ENCODE measurements at regions of chr7 and their contacts with region 1.

Region 1: GRCh38 chr7:26864309-26865093 is at the start of gene SKAP2:
- DNase-seq: peak; percentile 92
- ATAC-seq: peak; percentile 84
- H3K4me3 Mint-ChIP-seq: peak within 1 kb of the TSS; percentile 99
- H3K27ac Mint-ChIP-seq: peak within 1 kb of the TSS; percentile 99
- H3K4me1 Mint-ChIP-seq: peaks cover 32% of the 10 kb centered on the region
- H3K27me3 Mint-ChIP-seq: no peaks in the 10 kb centered on the region
- CTCF ChIP-seq: no peak
- total RNA-seq, gene SKAP2: 70.3 and 75.6 TPM in 2 replicates

Region 2: GRCh38 chr7:25894902-25895791 is 969.4 kb before region 1 on chr7:
- CTCF ChIA-PET with region 1: no interaction called
- POLR2A ChIA-PET with region 1: no interaction called
- intact Hi-C with region 1: loop called (anchors 1 kb)
- DNase-seq: peak; percentile 77
- ATAC-seq: peak; percentile 88
- H3K4me3 Mint-ChIP-seq: peak overlapping the region; percentile 75
- H3K27ac Mint-ChIP-seq: peak overlapping the region; percentile 62
- H3K4me1 Mint-ChIP-seq: peaks cover 32% of the 10 kb centered on the region
- H3K27me3 Mint-ChIP-seq: peaks cover 38% of the 10 kb centered on the region
- CTCF ChIP-seq: peak; percentile 36

Region 3: DNA sequence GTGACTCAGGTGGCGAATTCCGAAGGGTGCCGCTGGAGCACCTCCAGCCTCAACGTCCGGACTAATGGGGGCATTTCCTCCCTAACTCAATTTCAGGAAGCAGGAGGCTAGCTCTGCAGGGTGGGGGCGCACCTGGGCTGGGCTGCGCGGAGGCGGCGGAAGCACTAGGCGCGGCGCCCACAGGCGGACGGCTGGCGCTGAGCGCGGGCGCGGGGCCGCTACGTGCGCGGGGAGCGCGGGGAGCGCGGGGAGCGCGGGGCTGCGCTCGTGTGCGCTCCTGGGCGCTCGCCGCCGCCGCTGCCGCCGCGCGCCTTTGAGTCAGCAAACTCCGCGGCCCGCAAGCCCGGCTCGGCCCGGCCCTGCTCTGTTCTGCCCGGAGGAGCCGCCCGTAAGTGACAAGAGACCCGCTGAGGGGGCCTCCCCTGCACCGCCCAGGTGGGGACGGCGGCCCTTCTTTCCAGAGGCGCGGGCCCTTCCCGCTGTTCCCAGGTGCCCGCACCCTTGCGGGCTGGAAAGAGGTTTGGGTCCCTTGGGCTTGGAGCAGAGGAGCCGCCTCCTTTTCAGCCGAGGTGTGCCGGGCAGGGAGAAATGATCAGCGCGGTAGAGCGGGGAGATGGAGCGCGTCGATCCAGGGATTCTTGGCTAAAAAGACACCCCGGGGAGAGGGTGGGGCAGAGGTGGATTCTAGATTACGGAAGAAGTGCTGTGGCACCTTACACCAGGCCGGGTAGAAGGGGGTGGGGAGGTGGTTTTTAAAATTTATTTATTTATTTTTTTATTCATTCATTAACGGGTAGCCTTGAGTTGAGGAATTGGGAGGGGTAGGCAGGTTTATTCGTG is 572.6 kb before region 1 on chr7 and contains the start of gene SNX10:
- CTCF ChIA-PET with region 1: no interaction called
- POLR2A ChIA-PET with region 1: interaction called, 3 read pairs
- intact Hi-C with region 1: loop called (anchors 5 kb)
- DNase-seq: peak; percentile 76
- ATAC-seq: peak; percentile 77
- H3K4me3 Mint-ChIP-seq: peak within 1 kb of the TSS; percentile 92
- H3K27ac Mint-ChIP-seq: peak within 1 kb of the TSS; percentile 95
- H3K4me1 Mint-ChIP-seq: peaks cover 51% of the 10 kb centered on the region
- H3K27me3 Mint-ChIP-seq: no peaks in the 10 kb centered on the region
- CTCF ChIP-seq: no peak
- total RNA-seq, gene SNX10: 28.9 and 32.3 TPM in 2 replicates

Region 4: DNA sequence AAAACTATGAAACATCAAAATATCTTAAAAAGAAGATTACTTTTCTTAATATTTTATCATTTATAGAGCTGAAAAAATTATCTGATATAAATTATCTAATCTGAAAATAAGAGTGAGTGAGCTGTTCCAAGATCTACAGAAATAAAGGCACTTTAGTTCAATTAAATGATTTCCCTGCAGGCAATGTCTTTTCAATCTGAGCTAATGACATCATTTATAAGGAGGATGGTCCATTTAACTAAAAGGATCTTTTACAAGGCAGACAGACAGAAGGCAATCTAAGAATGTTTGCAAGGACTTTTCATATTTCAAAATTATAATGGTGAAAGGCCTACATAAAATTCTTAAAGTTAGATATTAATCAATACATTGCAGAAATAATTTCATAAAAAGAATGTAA is 71.9 kb before region 1 on chr7:
- CTCF ChIA-PET with region 1: no interaction called
- POLR2A ChIA-PET with region 1: no interaction called
- intact Hi-C with region 1: no loop called
- DNase-seq: no peak
- ATAC-seq: no peak
- H3K4me3 Mint-ChIP-seq: no peak overlapping the region
- H3K27ac Mint-ChIP-seq: no peak overlapping the region
- H3K4me1 Mint-ChIP-seq: no peaks in the 10 kb centered on the region
- H3K27me3 Mint-ChIP-seq: no peaks in the 10 kb centered on the region
- CTCF ChIP-seq: no peak

Region 5: DNA sequence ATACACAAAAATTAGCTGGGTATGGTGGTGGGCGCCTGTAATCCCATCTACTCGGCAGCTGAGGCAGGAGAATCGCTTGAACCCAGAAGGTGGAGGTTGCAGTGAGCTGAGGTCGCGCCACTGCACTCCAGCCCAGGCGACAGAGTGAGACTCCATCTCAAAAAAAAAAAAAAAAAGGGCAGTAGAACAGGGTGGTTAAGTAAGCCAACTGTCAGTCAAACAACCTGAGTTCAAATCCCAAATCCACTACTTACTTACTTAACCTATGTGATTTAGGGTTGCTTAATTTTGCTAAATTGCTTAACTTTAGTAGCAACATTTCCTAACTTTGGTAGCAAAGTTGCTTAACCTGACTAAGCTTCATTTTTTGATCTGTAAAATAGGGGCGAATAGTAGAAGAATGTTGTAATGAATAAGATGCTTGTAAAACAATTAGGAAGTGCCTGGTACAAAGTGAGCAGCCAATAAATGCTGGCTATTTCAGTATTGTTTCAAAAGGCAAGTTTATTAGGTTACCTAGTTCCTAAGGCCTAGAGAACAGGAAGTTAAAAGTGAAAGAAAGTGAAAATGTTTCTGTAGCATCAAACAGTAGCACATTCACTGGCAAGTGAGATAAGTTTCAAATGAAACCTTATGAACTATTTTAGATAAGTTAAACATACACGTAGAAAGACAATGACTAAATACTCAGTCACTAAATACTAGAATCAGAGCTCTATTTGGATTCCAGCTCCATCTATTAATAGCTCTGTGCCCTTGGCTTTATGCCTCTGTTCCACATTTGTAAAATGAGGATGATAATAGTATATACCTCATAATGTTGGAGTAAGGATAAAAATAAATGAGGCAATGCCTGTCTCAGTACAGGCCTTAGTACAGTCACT is 167.0 kb after region 1 on chr7:
- CTCF ChIA-PET with region 1: no interaction called
- POLR2A ChIA-PET with region 1: no interaction called
- intact Hi-C with region 1: loop called (anchors 5 kb)
- DNase-seq: no peak
- ATAC-seq: peak; percentile 50
- H3K4me3 Mint-ChIP-seq: no peak overlapping the region
- H3K27ac Mint-ChIP-seq: peak overlapping the region; percentile 47
- H3K4me1 Mint-ChIP-seq: peaks cover 17% of the 10 kb centered on the region
- H3K27me3 Mint-ChIP-seq: no peaks in the 10 kb centered on the region
- CTCF ChIP-seq: no peak

Region 6: DNA sequence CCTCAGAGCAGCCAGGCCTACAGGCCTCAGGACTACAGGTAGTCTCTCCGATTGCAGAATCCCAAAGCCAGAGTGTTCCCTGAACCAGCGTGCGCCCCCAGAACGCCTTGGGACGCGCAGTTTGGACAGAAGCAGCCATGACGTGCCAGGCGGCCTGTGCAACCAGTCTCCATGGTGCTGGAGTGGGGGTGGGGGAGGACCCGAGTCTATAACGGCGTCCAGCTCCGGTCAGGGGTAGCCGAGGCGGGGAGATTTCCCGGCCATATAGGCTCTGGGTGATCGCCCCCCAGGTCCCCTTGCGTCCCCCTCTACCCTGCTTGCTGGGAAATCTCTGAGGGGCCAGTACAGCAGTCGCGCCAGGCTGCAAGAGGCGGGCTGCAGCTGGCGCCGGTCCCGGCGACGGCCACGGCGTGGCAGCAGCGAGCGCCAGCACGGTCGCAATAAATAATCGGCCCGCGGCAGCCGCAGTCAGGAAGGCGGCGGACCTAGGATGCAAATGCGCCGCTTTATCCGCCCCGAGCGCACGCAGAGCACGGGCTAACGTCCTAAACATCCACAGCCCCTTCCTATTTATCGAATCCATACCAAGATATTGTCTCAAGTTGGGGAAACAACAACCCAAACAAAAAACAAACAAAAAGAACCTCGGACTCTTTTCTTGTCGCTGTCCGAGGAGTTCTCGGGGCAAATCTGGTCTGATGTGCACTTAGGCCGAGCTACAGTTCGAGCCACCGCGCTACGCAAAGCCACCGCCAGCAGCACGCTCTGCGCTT is 286.3 kb after region 1 on chr7:
- CTCF ChIA-PET with region 1: no interaction called
- POLR2A ChIA-PET with region 1: no interaction called
- intact Hi-C with region 1: loop called (anchors 1 kb)
- DNase-seq: peak; percentile 69
- ATAC-seq: peak; percentile 91
- H3K4me3 Mint-ChIP-seq: peak overlapping the region; percentile 80
- H3K27ac Mint-ChIP-seq: peak overlapping the region; percentile 12
- H3K4me1 Mint-ChIP-seq: peaks cover 48% of the 10 kb centered on the region
- H3K27me3 Mint-ChIP-seq: peaks cover 76% of the 10 kb centered on the region
- CTCF ChIP-seq: peak; percentile 71

Region 7: DNA sequence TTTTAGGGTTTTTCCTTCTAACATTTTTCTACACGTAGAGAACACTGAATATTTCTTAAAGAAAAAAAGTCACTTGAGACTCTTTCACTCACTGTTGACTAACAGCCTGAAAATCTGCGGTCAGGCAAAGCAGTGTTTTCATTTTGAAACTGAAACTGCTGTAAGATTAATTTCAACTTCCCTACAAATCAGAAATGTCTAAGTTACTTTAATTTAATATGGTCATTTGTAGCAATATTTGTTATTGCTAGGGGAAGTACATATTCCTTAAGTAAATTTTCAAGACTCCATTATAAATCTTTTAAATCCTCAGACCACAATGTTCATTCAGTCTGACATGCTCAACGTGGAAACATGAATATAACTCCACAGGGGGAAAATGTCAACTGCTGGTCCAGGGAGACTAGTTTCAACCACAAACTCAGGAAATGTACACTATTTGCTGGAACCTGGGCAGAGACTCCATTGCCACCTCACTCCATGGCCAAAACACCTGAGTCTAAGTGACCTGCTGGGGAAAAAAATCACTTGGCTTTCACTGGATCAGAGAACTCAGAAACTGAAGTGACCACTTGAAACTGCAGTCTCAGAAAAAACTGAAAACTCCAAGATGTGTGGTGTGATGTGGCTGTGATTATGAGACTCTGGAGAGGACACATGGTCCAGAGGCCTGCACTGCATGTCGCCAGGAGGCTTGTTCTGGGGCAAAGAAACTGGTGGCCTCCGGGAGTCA is 1036.7 kb after region 1 on chr7:
- CTCF ChIA-PET with region 1: no interaction called
- POLR2A ChIA-PET with region 1: no interaction called
- intact Hi-C with region 1: loop called (anchors 5 kb)
- DNase-seq: no peak
- ATAC-seq: peak; percentile 76
- H3K4me3 Mint-ChIP-seq: peak overlapping the region; percentile 46
- H3K27ac Mint-ChIP-seq: peak overlapping the region; percentile 86
- H3K4me1 Mint-ChIP-seq: peaks cover 70% of the 10 kb centered on the region
- H3K27me3 Mint-ChIP-seq: no peaks in the 10 kb centered on the region
- CTCF ChIP-seq: no peak